ENCODE measurements at regions of chr1 and their contacts with region 1.

Region 1: DNA sequence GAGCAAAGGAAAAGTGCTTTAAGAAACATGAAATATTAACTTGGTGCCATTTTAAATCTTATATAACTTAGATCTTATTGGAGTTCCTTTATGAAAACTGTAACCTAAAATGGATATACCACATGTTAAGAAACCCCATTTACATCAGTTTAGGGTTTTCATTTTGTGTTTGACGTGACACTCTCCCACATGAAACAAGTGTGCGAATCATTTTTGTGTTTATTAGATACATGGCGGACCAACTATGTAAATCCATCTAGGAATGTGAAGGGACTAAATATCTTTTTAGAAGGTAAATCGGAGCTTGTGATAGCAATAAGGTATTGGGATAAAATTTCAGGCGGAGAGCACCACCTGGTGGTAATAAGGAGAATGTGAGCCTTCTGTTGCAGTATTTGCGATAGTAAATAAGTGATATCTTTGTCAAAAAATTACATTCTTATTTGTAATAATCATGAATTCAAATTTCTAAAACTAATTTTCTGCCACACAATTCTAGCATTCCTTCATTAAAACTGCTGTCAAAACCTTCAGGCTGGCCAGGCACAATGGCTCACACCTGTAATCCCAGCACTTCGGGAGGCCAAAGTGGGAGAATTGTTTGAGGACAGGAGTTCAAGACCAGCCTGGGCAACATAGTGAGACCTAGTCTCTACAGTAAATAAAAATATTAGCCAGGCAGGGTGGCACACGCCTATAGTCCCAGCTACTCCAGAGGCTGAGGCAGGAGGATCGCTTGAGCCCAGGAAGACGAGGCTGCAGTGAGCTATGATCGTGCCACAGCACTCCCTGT is 31.3 kb downstream of the SMAP2 start:
- DNase-seq: peak in 1 of 5 donors; percentile 25
- ATAC-seq: peak in 2 of 4 donors; percentile 57 to 61
- H3K4me3 ChIP-seq: peak overlapping the region in 1 of 12 donors; percentile 8
- H3K27ac ChIP-seq: peak overlapping the region in 2 of 12 donors; percentile 13 to 67
- H3K4me1 ChIP-seq: peaks cover 0 to 53% (median 2%) of the 10 kb centered on the region in 12 donors
- H3K27me3 ChIP-seq: no peaks in the 10 kb centered on the region
- CTCF ChIP-seq: peak; percentile 74 to 92 (median 86)
- POLR2A ChIP-seq: no peak

Region 2: DNA sequence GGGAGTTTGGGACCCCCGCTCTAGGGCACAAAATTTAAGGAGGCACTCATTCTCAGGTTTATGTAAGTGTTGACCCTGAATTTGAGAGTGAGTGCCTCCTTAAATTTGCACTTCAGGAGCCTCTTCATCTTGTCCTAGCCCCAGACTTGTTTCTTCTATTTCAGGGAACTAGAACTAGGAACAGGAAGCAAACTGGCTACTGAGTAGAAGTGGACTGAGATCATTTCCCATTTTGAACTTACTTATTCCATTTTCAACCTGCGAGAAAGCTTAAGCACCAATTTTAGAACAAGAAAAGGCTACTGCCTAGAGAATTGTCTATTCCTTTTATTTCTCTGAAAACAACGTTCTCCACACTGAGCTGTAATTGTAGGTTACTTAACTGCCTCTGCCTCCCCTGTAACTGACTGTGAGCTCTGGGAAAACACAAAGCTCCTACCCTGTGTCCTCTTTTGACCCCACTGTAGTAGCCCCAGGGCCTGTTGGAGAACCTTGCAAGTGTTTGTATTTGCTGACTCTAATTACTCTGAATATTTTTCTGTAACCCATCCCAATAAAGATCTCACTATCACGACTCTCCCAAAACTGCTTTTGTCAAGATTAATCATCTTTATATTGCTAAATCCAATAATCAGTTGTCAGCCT is 310.3 kb before region 1 on chr1:
- intact Hi-C with region 1: loop called in 1 of 10 experiments (anchors 5 kb)
- DNase-seq: no peak
- ATAC-seq: peak in 1 of 4 donors; percentile 37
- H3K4me3 ChIP-seq: peak overlapping the region in 1 of 12 donors; percentile 21
- H3K27ac ChIP-seq: peak overlapping the region in 2 of 12 donors; percentile 11 to 79
- H3K4me1 ChIP-seq: peaks cover 0 to 41% (median 5%) of the 10 kb centered on the region in 12 donors
- H3K27me3 ChIP-seq: no peaks in the 10 kb centered on the region
- CTCF ChIP-seq: no peak
- POLR2A ChIP-seq: no peak

Region 3: DNA sequence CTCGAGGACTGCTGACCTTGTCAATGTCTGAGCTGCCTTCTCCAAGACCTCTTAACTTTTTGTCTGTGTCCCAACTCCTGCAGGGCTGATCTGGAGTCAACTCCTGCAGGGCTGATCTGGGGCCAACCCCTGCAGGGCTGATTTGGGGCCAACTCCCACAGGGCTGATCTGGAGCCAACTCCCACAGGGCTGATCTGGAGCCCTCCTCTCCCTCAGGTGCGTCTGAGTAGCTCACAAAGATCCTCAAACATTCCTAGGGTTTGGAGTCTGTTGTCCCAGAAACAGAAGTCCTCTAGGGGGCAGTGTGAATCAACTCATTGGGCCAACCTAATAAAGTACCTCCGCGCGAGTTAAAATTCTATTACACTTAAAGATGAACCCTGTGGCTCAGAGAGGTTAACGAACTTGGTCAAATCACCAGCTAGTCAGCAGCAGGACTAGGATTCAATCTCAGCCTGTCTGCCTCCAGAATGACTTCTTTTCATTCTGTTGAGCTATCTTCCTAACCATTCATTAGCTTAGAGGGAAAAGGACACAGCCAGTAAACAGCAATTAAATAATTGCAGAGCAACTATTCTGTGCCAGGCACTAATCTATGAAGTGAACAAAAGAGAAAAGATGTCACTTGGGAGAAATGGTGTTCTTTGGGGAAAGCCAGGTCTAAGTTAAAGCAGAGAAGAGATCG is 260.8 kb before region 1 on chr1:
- intact Hi-C with region 1: loop called (anchors 1 to 5 kb)
- DNase-seq: peak in 4 of 5 donors; percentile 31 to 51 (median 35)
- ATAC-seq: peak in 3 of 4 donors; percentile 72 to 80 (median 77)
- H3K4me3 ChIP-seq: no peak overlapping the region
- H3K27ac ChIP-seq: no peak overlapping the region
- H3K4me1 ChIP-seq: peaks cover 0 to 6% (median 0%) of the 10 kb centered on the region in 12 donors
- H3K27me3 ChIP-seq: peaks cover 0 to 33% (median 7%) of the 10 kb centered on the region in 9 donors
- CTCF ChIP-seq: peak; percentile 58 to 82 (median 74)
- POLR2A ChIP-seq: no peak

Region 4: GRCh38 chr1:40153073-40153770 is 251.6 kb before region 1 on chr1:
- intact Hi-C with region 1: loop called in 3 of 10 experiments (anchors 5 kb)
- DNase-seq: no peak
- ATAC-seq: no peak
- H3K4me3 ChIP-seq: no peak overlapping the region
- H3K27ac ChIP-seq: no peak overlapping the region
- H3K4me1 ChIP-seq: peaks cover 0 to 25% (median 0%) of the 10 kb centered on the region in 12 donors
- H3K27me3 ChIP-seq: peaks cover 0 to 10% (median 0%) of the 10 kb centered on the region in 9 donors
- CTCF ChIP-seq: peak; percentile 45 to 82 (median 68)
- POLR2A ChIP-seq: no peak

Region 5: DNA sequence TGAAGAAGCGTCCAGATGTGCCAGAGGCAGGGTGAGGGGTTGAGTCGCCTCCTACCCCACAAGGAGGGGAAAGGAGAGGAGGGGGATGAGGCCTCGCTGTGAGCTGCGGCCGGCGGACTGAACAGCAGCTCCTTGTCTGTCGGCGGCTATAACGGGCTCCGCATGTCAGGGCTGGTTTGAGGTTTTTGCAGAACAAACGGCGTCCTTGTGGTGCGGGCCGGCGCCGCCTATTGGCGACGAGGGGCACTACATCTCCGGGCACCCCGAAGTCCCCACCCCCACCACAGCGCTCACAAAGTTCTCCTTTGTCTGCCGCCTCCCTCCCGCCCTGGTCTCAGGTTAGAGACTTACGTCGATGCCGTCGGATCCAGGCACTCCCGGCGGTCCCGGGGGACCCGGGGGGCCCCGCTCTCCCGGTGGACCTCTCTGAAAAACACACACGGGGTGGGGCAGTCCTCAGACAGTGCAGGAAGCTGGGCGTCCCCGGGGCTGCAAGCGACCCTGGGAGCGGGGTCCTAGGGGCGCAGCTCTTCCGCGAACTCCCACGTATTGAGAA is 89.5 kb before region 1 on chr1:
- intact Hi-C with region 1: loop called in 1 of 10 experiments (anchors 10 kb)
- DNase-seq: peak; percentile 78 to 89 (median 80)
- ATAC-seq: peak; percentile 78 to 93 (median 89)
- H3K4me3 ChIP-seq: peak overlapping the region; percentile 6 to 60 (median 47)
- H3K27ac ChIP-seq: peak overlapping the region in 1 of 12 donors; percentile 41
- H3K4me1 ChIP-seq: peaks cover 0 to 44% (median 17%) of the 10 kb centered on the region in 12 donors
- H3K27me3 ChIP-seq: peaks cover 15 to 51% (median 25%) of the 10 kb centered on the region in 9 donors
- CTCF ChIP-seq: peak; percentile 84 to 96 (median 92)
- POLR2A ChIP-seq: no peak

Region 6: GRCh38 chr1:40338745-40339424 is 66.0 kb before region 1 on chr1:
- intact Hi-C with region 1: loop called in 9 of 10 experiments (anchors 2 to 10 kb)
- DNase-seq: peak; percentile 51 to 86 (median 74)
- ATAC-seq: peak; percentile 61 to 85 (median 74)
- H3K4me3 ChIP-seq: peak overlapping the region in 1 of 12 donors; percentile 40
- H3K27ac ChIP-seq: peak overlapping the region in 1 of 12 donors; percentile 92
- H3K4me1 ChIP-seq: peaks cover 0 to 53% (median 0%) of the 10 kb centered on the region in 12 donors
- H3K27me3 ChIP-seq: peaks cover 0 to 13% (median 0%) of the 10 kb centered on the region in 9 donors
- CTCF ChIP-seq: peak; percentile 94 to 99 (median 96)
- POLR2A ChIP-seq: no peak

Region 7: DNA sequence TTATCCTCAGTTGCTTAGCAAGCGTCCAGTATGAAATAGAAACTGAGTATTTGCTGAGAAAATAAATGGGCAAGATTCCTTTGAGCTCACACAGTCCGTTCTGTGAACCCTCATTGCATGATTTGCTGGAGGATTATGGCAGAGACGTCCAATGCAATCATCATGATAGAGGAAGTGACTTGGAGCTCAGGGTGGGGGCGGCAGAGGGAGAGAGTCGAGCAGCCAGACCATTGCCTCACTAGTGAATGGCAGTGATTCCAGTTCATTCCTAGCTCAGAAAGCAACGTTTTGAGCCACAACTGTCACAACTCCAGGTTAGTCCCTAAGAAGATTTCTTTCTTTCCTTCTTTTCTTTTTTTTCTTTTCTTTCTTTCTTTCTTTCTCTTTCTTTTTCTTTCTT is 60.3 kb before region 1 on chr1:
- intact Hi-C with region 1: loop called in 9 of 10 experiments (anchors 2 to 10 kb)
- DNase-seq: peak in 4 of 5 donors; percentile 23 to 46 (median 36)
- ATAC-seq: peak in 3 of 4 donors; percentile 74 to 88 (median 75)
- H3K4me3 ChIP-seq: peak overlapping the region in 3 of 12 donors; percentile 10 to 47 (median 17)
- H3K27ac ChIP-seq: peak overlapping the region in 1 of 12 donors; percentile 85
- H3K4me1 ChIP-seq: peaks cover 0 to 52% (median 0%) of the 10 kb centered on the region in 12 donors
- H3K27me3 ChIP-seq: no peaks in the 10 kb centered on the region
- CTCF ChIP-seq: no peak
- POLR2A ChIP-seq: no peak

Region 8: DNA sequence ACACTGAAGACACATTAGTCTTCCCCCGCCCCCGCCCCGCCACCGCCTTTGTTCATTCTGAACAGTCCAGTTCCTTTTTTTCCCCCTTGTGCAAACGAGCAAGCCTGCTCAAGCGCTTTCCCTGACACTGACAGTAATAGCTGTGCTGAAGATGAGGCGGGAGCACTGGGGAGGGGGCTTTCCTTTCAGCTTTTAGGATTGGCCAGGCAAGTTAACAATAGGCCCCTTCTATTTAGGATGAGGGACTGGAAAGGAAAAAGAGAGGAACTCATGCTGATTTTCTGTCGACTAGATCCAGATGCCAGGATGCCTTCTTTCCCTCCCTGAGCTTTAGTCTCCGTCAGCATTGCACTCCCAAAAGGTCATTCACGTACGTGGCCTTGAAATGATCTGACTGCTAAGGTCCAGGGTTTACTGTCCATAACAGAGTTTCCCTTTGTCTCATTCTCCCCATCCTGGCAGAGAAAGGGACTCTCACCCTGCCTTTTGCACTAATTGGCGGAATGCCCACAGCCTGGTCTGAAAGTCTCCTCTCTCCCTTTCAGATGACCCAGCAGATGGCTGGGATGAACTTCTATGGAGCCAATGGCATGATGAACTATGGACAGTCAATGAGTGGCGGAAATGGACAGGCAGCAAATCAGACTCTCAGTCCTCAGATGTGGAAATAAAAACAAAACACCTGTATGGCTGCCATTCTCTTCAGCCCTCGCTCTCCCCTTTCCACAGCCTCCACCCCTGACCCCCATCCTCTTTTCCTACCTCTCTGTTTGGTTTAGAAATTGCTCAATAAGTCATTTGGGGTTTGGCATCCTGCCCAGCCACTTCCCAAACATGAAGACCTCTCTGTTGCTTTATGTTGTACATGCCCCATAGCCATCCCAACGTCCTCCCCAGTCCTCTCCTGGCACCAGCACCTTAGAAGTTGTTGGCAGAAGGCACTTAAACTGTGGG is 16.8 kb after region 1 on chr1:
- intact Hi-C with region 1: no loop called
- DNase-seq: peak in 1 of 5 donors; percentile 31
- ATAC-seq: peak; percentile 5 to 21 (median 12)
- H3K4me3 ChIP-seq: no peak overlapping the region
- H3K27ac ChIP-seq: peak overlapping the region in 1 of 12 donors; percentile 71
- H3K4me1 ChIP-seq: peaks cover 0 to 34% (median 10%) of the 10 kb centered on the region in 12 donors
- H3K27me3 ChIP-seq: no peaks in the 10 kb centered on the region
- CTCF ChIP-seq: no peak
- POLR2A ChIP-seq: no peak

Measured in heart left ventricle (tissue), 16 donors.